ENCODE measurements at regions of chr2 and their contacts with region 1.

Region 1: GRCh38 chr2:203887677-203888076 is 20.1 kb downstream of the CTLA4 start:
- DNase-seq: no peak
- H3K4me3 ChIP-seq: no peak overlapping the region
- H3K27ac ChIP-seq: no peak overlapping the region
- H3K4me1 ChIP-seq: no peaks in the 10 kb centered on the region
- CTCF ChIP-seq: no peak

Region 2: GRCh38 chr2:203814661-203815540 is 72.8 kb before region 1 on chr2:
- CTCF ChIA-PET with region 1: no interaction called
- POLR2A ChIA-PET with region 1: no interaction called
- intact Hi-C with region 1: no loop called
- DNase-seq: peak; percentile 89
- H3K4me3 ChIP-seq: peak overlapping the region; percentile 13
- H3K27ac ChIP-seq: no peak overlapping the region
- H3K4me1 ChIP-seq: peaks cover 35% of the 10 kb centered on the region
- CTCF ChIP-seq: peak; percentile 96

Region 3: GRCh38 chr2:203873921-203874631 is 13.6 kb before region 1 on chr2:
- CTCF ChIA-PET with region 1: no interaction called
- POLR2A ChIA-PET with region 1: interaction called, 10 read pairs
- intact Hi-C with region 1: no loop called
- DNase-seq: peak; percentile 54
- H3K4me3 ChIP-seq: peak overlapping the region; percentile 15
- H3K27ac ChIP-seq: peak overlapping the region; percentile 0
- H3K4me1 ChIP-seq: peaks cover 11% of the 10 kb centered on the region
- CTCF ChIP-seq: no peak; the same call in 1 of the 2 replicates

Region 4: GRCh38 chr2:203909261-203909967 is 21.7 kb after region 1 on chr2:
- CTCF ChIA-PET with region 1: no interaction called
- POLR2A ChIA-PET with region 1: no interaction called
- intact Hi-C with region 1: no loop called
- DNase-seq: peak; percentile 42
- H3K4me3 ChIP-seq: no peak overlapping the region
- H3K27ac ChIP-seq: no peak overlapping the region
- H3K4me1 ChIP-seq: peaks cover 7% of the 10 kb centered on the region
- CTCF ChIP-seq: peak; percentile 93

Region 5: DNA sequence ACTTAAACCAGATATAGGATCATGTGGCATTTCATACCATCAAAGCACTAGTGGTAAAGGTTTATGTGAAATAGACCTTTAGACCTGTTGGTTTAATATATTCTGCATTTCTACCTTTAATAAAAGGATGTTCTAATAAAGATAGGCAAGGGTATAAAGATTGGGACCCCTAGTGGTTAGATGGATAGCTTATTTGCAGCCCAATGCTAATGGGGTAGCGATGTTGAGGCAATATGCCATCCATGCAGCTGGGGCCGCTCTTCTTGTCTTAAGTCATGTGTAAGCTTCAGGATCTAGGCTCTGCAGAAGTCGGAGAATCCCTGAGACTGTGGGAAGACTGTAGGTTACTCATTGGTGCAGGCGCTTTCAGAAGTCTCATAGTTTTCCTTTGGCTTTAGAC is 163.8 kb after region 1 on chr2:
- CTCF ChIA-PET with region 1: no interaction called
- POLR2A ChIA-PET with region 1: no interaction called
- intact Hi-C with region 1: no loop called
- DNase-seq: peak; percentile 46
- H3K4me3 ChIP-seq: no peak overlapping the region
- H3K27ac ChIP-seq: no peak overlapping the region
- H3K4me1 ChIP-seq: peaks cover 35% of the 10 kb centered on the region
- CTCF ChIP-seq: peak; percentile 91